ENCODE measurements at regions of chr1 and their contacts with region 1.

Region 1: DNA sequence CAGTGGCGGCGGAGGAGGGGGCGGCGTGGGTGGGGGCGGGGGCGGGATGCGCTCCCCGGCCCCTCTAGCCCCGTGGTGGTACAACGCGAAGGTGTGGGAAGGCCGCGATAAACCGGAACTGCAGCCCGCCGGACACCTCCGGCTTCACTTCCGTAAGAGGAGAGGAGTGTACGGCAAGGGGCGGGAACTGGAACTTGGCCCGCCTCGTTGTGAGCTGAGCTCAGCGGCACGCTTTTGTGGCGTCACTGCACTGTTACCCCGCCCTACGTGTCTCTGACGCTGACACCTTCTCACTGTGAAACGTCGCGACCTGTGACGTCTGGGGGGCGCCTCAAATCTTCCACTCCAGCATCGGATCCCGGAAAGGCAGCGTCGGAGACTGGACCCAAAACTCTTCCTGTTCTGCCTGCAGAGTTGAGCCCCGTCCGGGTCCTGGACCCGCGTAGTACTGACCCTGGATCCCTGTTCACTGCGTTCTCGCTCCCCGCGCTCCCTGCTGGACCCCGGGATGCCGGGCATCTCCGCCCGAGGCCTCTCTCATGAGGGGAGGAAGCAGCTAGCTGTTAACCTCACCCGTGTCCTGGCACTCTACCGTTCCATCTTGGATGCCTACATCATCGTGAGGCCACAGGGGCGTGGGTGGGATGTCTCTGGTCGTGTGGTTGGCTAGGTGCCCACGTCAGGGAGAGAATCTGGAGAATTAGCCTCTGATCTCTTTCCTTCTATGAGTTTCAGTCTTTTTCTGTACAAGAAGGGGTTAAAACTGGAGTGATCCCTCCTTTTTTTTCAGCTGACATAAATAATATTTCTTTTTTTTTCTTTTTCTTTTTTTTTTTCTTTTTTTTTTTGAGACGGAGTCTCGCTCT is at the start of gene ISG20L2:
- H3K4me3 ChIP-seq: peak within 1 kb of the TSS; percentile 85
- H3K27ac ChIP-seq: peak within 1 kb of the TSS; percentile 72
- H3K4me1 ChIP-seq: peaks cover 7% of the 10 kb centered on the region
- CTCF ChIP-seq: peak; percentile 63; the same call in 1 of the 2 replicates

Region 2: DNA sequence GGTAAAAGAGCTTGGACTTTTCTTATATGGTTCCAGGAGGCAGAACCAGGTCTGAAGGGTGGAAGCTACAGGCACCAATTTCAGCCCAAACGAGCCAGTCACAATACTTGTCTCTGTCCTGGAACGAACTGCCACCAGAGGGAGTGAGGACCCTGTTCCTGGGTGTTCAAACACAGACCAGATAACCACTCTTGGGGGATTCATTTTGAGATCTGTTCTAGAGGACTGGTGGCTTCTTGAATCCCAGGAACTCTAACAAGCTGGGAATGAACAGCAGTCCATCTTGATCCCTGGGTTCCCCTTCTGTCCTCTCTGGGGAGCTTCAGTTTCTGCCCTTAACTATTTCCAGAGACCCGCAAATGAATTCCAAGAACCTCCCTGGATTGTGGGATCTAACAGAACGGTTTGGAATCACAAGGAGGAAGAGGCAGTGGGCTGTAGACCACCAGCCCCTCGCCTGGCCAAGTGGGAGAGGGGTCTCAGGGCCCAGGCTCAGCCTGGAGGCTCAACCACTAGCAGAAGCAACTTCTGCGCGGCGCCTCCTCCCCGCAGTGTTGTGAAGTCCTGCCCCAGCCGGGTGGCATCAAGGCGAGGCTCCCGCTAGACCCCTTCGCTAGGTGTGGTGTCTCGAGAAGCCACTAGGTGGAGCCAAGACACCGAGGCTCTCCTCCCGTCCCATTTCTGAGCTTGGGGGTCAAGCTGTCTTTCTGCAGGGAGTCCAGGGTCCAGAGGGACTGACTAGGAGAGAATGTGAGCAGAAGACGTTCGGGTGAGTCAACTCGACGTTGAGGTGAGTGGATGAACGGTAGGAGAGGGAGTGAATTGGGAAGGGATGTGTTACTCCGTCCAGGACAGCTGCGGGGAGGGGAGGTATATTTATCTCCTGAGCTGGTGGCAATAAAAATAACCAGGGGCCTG is 39.5 kb before region 1 on chr1:
- CTCF ChIA-PET with region 1: interaction called, 526 read pairs
- POLR2A ChIA-PET with region 1: interaction called, 44 read pairs
- H3K4me3 ChIP-seq: peak overlapping the region; percentile 36
- H3K27ac ChIP-seq: no peak overlapping the region
- H3K4me1 ChIP-seq: peaks cover 16% of the 10 kb centered on the region
- CTCF ChIP-seq: peak; percentile 94

Region 3: GRCh38 chr1:156740679-156741612 is 12.1 kb after region 1 on chr1 and contains the start of gene MRPL24:
- CTCF ChIA-PET with region 1: interaction called, 28 read pairs
- POLR2A ChIA-PET with region 1: interaction called, 84 read pairs
- H3K4me3 ChIP-seq: peak within 1 kb of the TSS; percentile 74
- H3K27ac ChIP-seq: peak within 1 kb of the TSS; percentile 59
- H3K4me1 ChIP-seq: no peaks in the 10 kb centered on the region
- CTCF ChIP-seq: 0 out of 2 replicates have a peak, but pooled peaks have one; percentile 11

Region 4: DNA sequence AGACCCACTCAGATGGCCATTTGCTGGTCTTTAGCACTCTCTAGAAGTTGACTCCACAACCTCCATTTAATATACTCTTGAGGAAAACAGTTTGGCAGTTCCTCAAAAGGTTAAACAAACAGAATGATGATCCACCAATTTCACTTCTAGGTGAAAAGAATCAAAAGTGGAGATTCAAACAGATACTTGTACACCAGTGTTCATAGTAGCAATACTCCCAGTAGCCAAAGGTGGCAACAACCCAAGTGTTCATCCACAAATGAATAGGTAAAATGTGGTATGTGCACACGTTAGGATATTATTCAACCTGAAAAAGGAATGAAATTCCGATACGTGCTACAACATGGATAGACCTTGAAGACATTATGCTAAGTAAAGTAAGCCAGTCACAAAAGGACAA is 44.8 kb after region 1 on chr1:
- CTCF ChIA-PET with region 1: interaction called, 31 read pairs
- POLR2A ChIA-PET with region 1: interaction called, 9 read pairs
- H3K4me3 ChIP-seq: no peak overlapping the region
- H3K27ac ChIP-seq: no peak overlapping the region
- H3K4me1 ChIP-seq: peaks cover 16% of the 10 kb centered on the region
- CTCF ChIP-seq: no peak

Region 5: DNA sequence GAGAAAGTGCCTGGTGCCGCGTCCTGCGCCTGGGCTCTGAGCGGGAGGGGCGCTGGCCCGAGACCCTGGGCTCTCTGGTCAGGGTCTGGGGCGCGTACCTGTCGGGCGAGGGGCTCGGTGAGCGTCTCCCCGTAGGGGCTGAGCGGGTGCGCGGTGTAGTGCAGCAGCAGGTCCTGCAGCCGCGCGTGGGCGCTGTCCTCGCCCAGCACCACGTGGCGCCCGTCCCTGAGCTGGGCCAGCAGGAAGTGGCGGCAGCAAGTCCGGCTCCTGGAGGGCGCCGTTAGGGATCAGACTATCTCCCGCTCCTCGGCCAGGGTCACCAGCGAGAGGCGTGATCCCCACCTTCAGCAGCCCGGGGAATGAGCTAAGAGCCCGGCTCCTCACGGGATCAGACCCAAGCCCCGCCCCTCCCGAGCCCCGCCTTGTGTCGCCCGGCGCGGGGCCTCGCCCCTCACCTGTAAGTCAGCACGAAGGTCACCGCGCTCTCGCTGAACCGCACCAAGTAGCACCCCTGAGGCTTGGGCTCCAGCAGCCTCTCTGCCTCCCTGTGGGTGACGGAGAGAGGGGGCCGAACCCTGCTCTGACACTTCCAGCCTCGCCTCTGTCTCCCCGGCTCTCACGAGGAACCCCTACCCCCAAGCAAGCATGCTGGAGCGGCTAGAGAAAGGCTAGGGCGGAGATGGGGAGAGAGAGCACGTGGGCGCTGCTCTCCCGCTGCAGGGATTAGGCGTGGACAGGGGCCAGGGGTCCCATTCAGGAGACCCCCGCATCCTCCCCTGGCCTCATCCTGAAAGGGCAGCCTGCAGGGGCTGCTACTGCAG is 85.1 kb after region 1 on chr1:
- CTCF ChIA-PET with region 1: no interaction called
- POLR2A ChIA-PET with region 1: no interaction called
- H3K4me3 ChIP-seq: no peak overlapping the region
- H3K27ac ChIP-seq: no peak overlapping the region
- H3K4me1 ChIP-seq: no peaks in the 10 kb centered on the region
- CTCF ChIP-seq: no peak

Region 6: GRCh38 chr1:156838981-156839410 is 110.2 kb after region 1 on chr1:
- CTCF ChIA-PET with region 1: interaction called, 38 read pairs
- POLR2A ChIA-PET with region 1: no interaction called
- H3K4me3 ChIP-seq: no peak overlapping the region
- H3K27ac ChIP-seq: no peak overlapping the region
- H3K4me1 ChIP-seq: no peaks in the 10 kb centered on the region
- CTCF ChIP-seq: peak; percentile 78; the same call in 1 of the 2 replicates

Region 7: GRCh38 chr1:156892190-156893047 is 163.6 kb after region 1 on chr1:
- CTCF ChIA-PET with region 1: interaction called, 79 read pairs
- POLR2A ChIA-PET with region 1: interaction called, 5 read pairs
- H3K4me3 ChIP-seq: no peak overlapping the region
- H3K27ac ChIP-seq: no peak overlapping the region
- H3K4me1 ChIP-seq: no peaks in the 10 kb centered on the region
- CTCF ChIP-seq: peak; percentile 86

Region 8: GRCh38 chr1:156961709-156962108 is 232.9 kb after region 1 on chr1:
- CTCF ChIA-PET with region 1: no interaction called
- POLR2A ChIA-PET with region 1: no interaction called
- H3K4me3 ChIP-seq: no peak overlapping the region
- H3K27ac ChIP-seq: no peak overlapping the region
- H3K4me1 ChIP-seq: no peaks in the 10 kb centered on the region
- CTCF ChIP-seq: peak; percentile 82